MCF 10A (cell line): ENCODE measurements at regions of chr7 and their contacts with region 1.

Region 1: GRCh38 chr7:64951250-64951848 is 39.5 kb downstream of the ZNF117 start:
- DNase-seq: peak; percentile 55
- H3K4me3 Mint-ChIP-seq: no peak overlapping the region
- H3K27ac Mint-ChIP-seq: no peak overlapping the region
- H3K4me1 Mint-ChIP-seq: no peaks in the 10 kb centered on the region
- H3K27me3 Mint-ChIP-seq: no peaks in the 10 kb centered on the region
- CTCF ChIP-seq: peak; percentile 73

Region 2: GRCh38 chr7:64839811-64840309 is 111.5 kb before region 1 on chr7:
- CTCF ChIA-PET with region 1: no interaction called
- POLR2A ChIA-PET with region 1: no interaction called
- intact Hi-C with region 1: no loop called
- DNase-seq: no peak
- H3K4me3 Mint-ChIP-seq: no peak overlapping the region
- H3K27ac Mint-ChIP-seq: no peak overlapping the region
- H3K4me1 Mint-ChIP-seq: no peaks in the 10 kb centered on the region
- H3K27me3 Mint-ChIP-seq: no peaks in the 10 kb centered on the region
- CTCF ChIP-seq: no peak

Region 3: DNA sequence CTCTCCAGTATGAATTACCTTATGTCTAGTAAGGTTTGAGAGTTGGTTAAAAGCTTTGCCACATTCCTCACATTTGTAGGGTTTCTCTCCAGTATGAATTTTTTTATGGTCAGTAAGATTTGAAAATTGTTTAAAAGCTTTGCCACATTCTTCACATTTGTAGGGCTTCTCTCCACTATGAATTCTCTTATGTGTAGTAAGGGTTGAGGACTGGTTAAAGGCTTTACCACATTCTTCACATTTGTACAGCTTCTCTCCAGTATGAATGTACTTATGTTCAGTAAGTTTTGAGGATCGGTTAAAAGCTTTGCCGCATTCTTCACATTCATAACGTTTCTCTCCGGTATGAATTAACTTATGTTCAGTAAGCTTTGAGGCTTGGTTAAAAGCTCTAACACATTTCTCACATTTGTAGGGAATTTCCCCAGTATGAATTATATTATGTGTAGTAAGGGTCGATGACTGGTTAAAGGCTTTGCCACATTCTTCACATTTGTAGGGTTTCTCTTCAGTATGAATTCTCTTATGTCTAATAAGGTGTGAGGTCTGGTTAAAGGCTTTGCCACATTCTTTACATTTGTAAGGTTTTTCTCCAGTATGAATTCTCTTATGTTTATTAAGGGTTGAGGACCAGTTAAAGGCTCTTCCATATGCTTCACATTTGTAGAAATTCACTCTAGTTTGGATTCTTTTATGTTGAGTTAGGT is 27.3 kb after region 1 on chr7:
- CTCF ChIA-PET with region 1: no interaction called
- POLR2A ChIA-PET with region 1: no interaction called
- intact Hi-C with region 1: no loop called
- DNase-seq: no peak
- H3K4me3 Mint-ChIP-seq: no peak overlapping the region
- H3K27ac Mint-ChIP-seq: no peak overlapping the region
- H3K4me1 Mint-ChIP-seq: no peaks in the 10 kb centered on the region
- H3K27me3 Mint-ChIP-seq: no peaks in the 10 kb centered on the region
- CTCF ChIP-seq: no peak

Region 4: GRCh38 chr7:65301007-65301406 is 349.7 kb after region 1 on chr7:
- CTCF ChIA-PET with region 1: interaction called, 71 read pairs
- POLR2A ChIA-PET with region 1: no interaction called
- intact Hi-C with region 1: no loop called
- DNase-seq: no peak
- H3K4me3 Mint-ChIP-seq: no peak overlapping the region
- H3K27ac Mint-ChIP-seq: no peak overlapping the region
- H3K4me1 Mint-ChIP-seq: no peaks in the 10 kb centered on the region
- H3K27me3 Mint-ChIP-seq: no peaks in the 10 kb centered on the region
- CTCF ChIP-seq: no peak